Ascending aorta (tissue), 2 donors: ENCODE measurements at regions of chr14 and their contacts with region 1.

Region 1: GRCh38 chr14:76168531-76168930 is 16.8 kb downstream of the GPATCH2L start:
- DNase-seq: no peak
- H3K4me3 ChIP-seq: no peak overlapping the region
- H3K27ac ChIP-seq: no peak overlapping the region
- H3K4me1 ChIP-seq: peaks cover 0 to 6% of the 10 kb centered on the region in 2 donors
- H3K27me3 ChIP-seq: no peaks in the 10 kb centered on the region
- CTCF ChIP-seq: no peak

Region 2: GRCh38 chr14:76088771-76089571 is 79.6 kb before region 1 on chr14:
- intact Hi-C with region 1: loop called (anchors 2 kb)
- DNase-seq: no peak
- H3K4me3 ChIP-seq: no peak overlapping the region
- H3K27ac ChIP-seq: no peak overlapping the region
- H3K4me1 ChIP-seq: no peaks in the 10 kb centered on the region
- H3K27me3 ChIP-seq: no peaks in the 10 kb centered on the region
- CTCF ChIP-seq: no peak